H1 (cell line): ENCODE measurements at regions of chr17 and their contacts with region 1.

Region 1: GRCh38 chr17:48997083-48997826 is at the start of gene IGF2BP1:
- DNase-seq: peak; percentile 77 to 82
- H3K4me3 ChIP-seq: peak within 1 kb of the TSS; percentile 91 to 100 (median 96)
- H3K27ac ChIP-seq: peak within 1 kb of the TSS; percentile 98
- H3K4me1 ChIP-seq: peaks cover 0 to 10% (median 4%) of the 10 kb centered on the region in 4 experiments; a peak in 4 of 7 replicates
- H3K27me3 ChIP-seq: no peaks in the 10 kb centered on the region
- CTCF ChIP-seq: no peak
- EP300 ChIP-seq: peak in 1 of 2 experiments; percentile 21; a peak in 1 of 3 replicates
- POLR2A ChIP-seq: peak; percentile 19 to 58
- RAD21 ChIP-seq: no peak
- total RNA-seq, gene IGF2BP1: 487 and 513 TPM in 2 replicates

Region 2: GRCh38 chr17:48878918-48879898 is 118.0 kb before region 1 on chr17:
- CTCF ChIA-PET with region 1: no interaction called
- POLR2A ChIA-PET with region 1: no interaction called
- DNase-seq: peak in 1 of 2 experiments; percentile 61
- H3K4me3 ChIP-seq: no peak overlapping the region
- H3K27ac ChIP-seq: no peak overlapping the region
- H3K4me1 ChIP-seq: no peaks in the 10 kb centered on the region
- H3K27me3 ChIP-seq: no peaks in the 10 kb centered on the region; a peak in 1 of 7 replicates
- CTCF ChIP-seq: peak; percentile 59 to 99 (median 91)
- EP300 ChIP-seq: no peak
- POLR2A ChIP-seq: no peak
- RAD21 ChIP-seq: peak; percentile 98 to 99

Region 3: GRCh38 chr17:48928876-48929811 is 68.1 kb before region 1 on chr17:
- CTCF ChIA-PET with region 1: no interaction called
- POLR2A ChIA-PET with region 1: interaction called, 36 read pairs
- DNase-seq: no peak
- H3K4me3 ChIP-seq: no peak overlapping the region
- H3K27ac ChIP-seq: no peak overlapping the region
- H3K4me1 ChIP-seq: no peaks in the 10 kb centered on the region
- H3K27me3 ChIP-seq: no peaks in the 10 kb centered on the region
- CTCF ChIP-seq: no peak
- EP300 ChIP-seq: no peak
- POLR2A ChIP-seq: no peak; a peak in 1 of 3 replicates
- RAD21 ChIP-seq: no peak

Region 4: DNA sequence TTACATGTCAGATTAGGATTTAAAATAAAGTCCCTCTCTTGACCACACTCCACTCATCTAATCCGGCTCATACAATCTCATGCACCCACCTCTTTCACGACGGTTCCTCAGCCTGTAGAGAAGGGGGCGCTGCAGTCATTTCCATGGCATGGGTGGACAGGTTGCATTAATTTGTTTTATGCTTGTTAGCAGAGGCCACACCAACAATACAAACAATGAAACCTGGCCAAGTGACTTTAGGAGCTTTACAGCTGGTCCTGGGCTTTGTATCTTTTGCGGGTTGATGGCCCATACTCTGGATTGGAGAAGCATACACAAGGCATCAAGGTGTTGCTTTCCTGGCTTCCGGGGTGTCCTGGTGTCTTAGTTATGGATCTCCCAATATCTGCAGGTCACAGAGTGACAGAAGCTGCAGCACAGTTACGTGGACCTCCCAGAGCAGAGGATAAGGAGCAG is 42.9 kb before region 1 on chr17:
- CTCF ChIA-PET with region 1: interaction called, 16 read pairs
- POLR2A ChIA-PET with region 1: interaction called, 41 read pairs
- DNase-seq: peak in 1 of 2 experiments; percentile 70
- H3K4me3 ChIP-seq: no peak overlapping the region
- H3K27ac ChIP-seq: no peak overlapping the region
- H3K4me1 ChIP-seq: peaks cover 0 to 5% (median 3%) of the 10 kb centered on the region in 4 experiments; a peak in 3 of 7 replicates
- H3K27me3 ChIP-seq: no peaks in the 10 kb centered on the region
- CTCF ChIP-seq: peak; percentile 77 to 81 (median 80)
- EP300 ChIP-seq: no peak
- POLR2A ChIP-seq: no peak
- RAD21 ChIP-seq: peak; percentile 89 to 95

Region 5: DNA sequence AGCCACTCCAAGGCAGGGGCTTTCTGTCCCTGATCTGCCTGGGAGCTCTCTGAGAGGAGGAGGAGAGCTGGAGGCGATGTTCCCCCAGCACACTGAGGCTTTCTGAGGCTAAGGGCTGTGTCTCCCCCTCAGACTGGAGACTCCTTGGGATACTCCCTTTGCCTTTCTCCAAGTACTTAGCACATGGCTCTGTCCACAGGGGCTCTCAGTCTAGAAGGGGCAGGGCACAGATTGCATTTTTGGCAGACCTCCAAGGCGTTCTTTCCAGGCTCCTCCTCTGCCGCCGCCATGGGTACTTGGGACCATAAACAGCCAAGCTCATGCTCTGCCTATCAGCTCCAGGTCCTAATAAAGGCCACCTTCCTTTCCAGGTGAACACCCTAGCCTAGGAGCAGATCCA is 27.0 kb before region 1 on chr17:
- CTCF ChIA-PET with region 1: interaction called, 6 read pairs
- POLR2A ChIA-PET with region 1: interaction called, 14 read pairs
- DNase-seq: no peak
- H3K4me3 ChIP-seq: no peak overlapping the region
- H3K27ac ChIP-seq: no peak overlapping the region
- H3K4me1 ChIP-seq: peaks cover 2 to 12% (median 8%) of the 10 kb centered on the region in 4 experiments
- H3K27me3 ChIP-seq: peaks cover 0 to 2% (median 0%) of the 10 kb centered on the region in 4 experiments; a peak in 1 of 7 replicates
- CTCF ChIP-seq: no peak
- EP300 ChIP-seq: no peak
- POLR2A ChIP-seq: no peak
- RAD21 ChIP-seq: no peak

Region 6: DNA sequence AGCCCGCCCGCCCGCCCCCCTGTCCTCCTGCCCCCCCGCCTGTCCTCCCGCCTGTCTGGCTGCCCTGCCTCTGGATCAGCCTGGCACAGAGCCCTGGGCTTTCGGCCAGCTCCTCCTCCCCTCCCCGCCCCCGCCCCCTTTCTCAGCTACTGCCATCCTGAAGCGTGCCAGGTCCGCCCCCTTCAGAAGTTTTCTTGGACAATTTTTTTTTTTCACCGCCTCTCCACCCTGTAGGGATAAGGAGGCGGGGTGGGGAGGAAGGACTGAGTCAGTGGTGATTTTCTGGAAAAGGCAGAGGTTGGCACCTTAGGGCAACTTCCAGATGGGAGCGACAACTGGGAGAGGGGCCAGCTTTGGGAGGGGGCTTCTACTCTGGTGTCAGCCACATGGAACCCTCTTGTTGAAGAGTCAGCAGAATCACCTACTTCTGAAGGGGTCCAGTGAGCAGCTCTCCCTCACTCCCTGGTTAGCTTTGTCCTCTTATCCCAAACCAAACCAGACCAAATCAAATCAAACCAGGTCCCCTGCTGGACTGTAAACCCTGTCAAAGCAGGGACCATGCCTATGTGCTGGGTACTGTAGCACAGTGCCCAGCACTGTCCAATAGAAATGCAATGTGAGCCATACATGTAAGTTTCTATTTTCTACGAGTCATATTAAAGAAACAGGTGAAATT is 19.7 kb after region 1 on chr17:
- CTCF ChIA-PET with region 1: interaction called, 43 read pairs
- POLR2A ChIA-PET with region 1: interaction called, 366 read pairs
- DNase-seq: peak in 1 of 2 experiments; percentile 46
- H3K4me3 ChIP-seq: no peak overlapping the region
- H3K27ac ChIP-seq: no peak overlapping the region
- H3K4me1 ChIP-seq: peaks cover 28 to 51% (median 40%) of the 10 kb centered on the region in 4 experiments
- H3K27me3 ChIP-seq: no peaks in the 10 kb centered on the region
- CTCF ChIP-seq: no peak
- EP300 ChIP-seq: no peak
- POLR2A ChIP-seq: no peak
- RAD21 ChIP-seq: no peak

Region 7: DNA sequence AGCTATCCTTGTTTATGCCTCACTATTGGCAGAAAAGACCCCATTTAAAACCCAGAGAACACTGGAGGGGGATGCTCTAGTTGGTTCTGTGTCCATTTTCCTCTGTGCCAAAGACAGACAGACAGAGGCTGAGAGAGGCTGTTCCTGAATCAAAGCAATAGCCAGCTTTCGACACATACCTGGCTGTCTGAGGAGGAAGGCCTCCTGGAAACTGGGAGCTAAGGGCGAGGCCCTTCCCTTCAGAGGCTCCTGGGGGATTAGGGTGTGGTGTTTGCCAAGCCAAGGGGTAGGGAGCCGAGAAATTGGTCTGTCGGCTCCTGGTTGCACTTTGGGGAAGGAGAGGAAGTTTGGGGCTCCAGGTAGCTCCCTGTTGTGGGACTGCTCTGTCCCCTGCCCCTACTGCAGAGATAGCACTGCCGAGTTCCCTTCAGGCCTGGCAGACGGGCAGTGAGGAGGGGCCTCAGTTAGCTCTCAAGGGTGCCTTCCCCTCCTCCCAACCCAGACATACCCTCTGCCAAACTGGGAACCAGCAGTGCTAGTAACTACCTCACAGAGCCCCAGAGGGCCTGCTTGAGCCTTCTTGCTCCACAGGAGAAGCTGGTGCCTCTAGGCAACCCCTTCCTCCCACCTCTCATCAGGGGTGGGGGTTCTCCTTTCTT is 56.0 kb after region 1 on chr17:
- CTCF ChIA-PET with region 1: no interaction called
- POLR2A ChIA-PET with region 1: interaction called, 24 read pairs
- DNase-seq: peak in 1 of 2 experiments; percentile 55
- H3K4me3 ChIP-seq: no peak overlapping the region
- H3K27ac ChIP-seq: no peak overlapping the region
- H3K4me1 ChIP-seq: peaks cover 10 to 23% (median 19%) of the 10 kb centered on the region in 4 experiments
- H3K27me3 ChIP-seq: no peaks in the 10 kb centered on the region
- CTCF ChIP-seq: no peak
- EP300 ChIP-seq: no peak
- POLR2A ChIP-seq: peak; percentile 34 to 58; a peak in 2 of 3 replicates
- RAD21 ChIP-seq: peak in 1 of 2 experiments; percentile 22; a peak in 1 of 4 replicates

Region 8: GRCh38 chr17:49076573-49077384 is 79.5 kb after region 1 on chr17:
- CTCF ChIA-PET with region 1: no interaction called
- POLR2A ChIA-PET with region 1: no interaction called
- DNase-seq: no peak
- H3K4me3 ChIP-seq: no peak overlapping the region
- H3K27ac ChIP-seq: no peak overlapping the region
- H3K4me1 ChIP-seq: peaks cover 0 to 3% (median 0%) of the 10 kb centered on the region in 4 experiments; a peak in 4 of 7 replicates
- H3K27me3 ChIP-seq: no peaks in the 10 kb centered on the region
- CTCF ChIP-seq: no peak
- EP300 ChIP-seq: no peak
- POLR2A ChIP-seq: no peak
- RAD21 ChIP-seq: no peak

Region 9: GRCh38 chr17:49157784-49158183 is 160.5 kb after region 1 on chr17:
- CTCF ChIA-PET with region 1: no interaction called
- POLR2A ChIA-PET with region 1: no interaction called
- DNase-seq: no peak
- H3K4me3 ChIP-seq: no peak overlapping the region
- H3K27ac ChIP-seq: no peak overlapping the region
- H3K4me1 ChIP-seq: no peaks in the 10 kb centered on the region
- H3K27me3 ChIP-seq: no peaks in the 10 kb centered on the region
- CTCF ChIP-seq: no peak
- EP300 ChIP-seq: no peak
- POLR2A ChIP-seq: no peak
- RAD21 ChIP-seq: no peak